H1 (cell line): ENCODE measurements at regions of chr6 and their contacts with region 1.

Region 1: DNA sequence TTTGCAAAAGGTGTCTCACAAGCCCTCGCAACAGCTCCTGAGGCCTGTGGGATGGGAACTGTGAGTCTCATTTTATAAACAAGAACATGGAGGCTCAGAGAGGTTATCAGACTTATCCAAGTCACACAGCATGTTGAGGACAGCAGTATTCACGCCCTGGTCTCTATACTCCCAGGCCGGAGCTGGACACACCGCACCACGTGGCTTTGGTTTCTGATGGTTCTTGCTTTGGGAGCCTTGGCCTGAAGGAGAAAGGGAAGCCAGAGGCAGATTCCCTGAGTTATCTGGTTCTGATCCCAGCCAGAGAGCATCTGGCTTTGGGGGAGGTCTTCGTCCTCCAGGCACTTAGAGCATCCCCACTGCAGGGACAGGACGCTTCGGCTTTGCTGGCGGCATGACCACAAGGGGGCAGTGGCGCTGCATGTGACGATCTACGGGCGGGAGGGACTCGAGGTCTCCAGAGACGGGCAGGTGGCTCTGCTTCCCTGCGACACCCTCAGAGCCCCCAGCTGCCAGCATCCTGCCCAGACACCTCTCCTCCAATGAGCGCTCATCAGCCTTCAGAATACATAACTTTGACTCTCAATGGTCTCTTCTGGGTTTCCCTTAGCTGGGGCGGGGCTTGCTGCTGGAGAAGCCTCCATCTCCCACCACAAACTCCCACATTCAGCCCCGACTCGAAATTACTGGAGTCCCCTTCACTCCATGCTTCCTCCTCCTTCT is 51.4 kb upstream of the SAYSD1 start:
- DNase-seq: peak; percentile 79 to 99
- H3K4me3 ChIP-seq: no peak overlapping the region
- H3K27ac ChIP-seq: no peak overlapping the region
- H3K4me1 ChIP-seq: no peaks in the 10 kb centered on the region
- H3K27me3 ChIP-seq: no peaks in the 10 kb centered on the region
- CTCF ChIP-seq: peak; percentile 98 to 100 (median 98)
- EP300 ChIP-seq: no peak
- POLR2A ChIP-seq: no peak
- RAD21 ChIP-seq: peak; percentile 99 to 100

Region 2: GRCh38 chr6:38933432-38933831 is 232.9 kb before region 1 on chr6:
- CTCF ChIA-PET with region 1: no interaction called
- POLR2A ChIA-PET with region 1: no interaction called
- DNase-seq: no peak
- H3K4me3 ChIP-seq: no peak overlapping the region
- H3K27ac ChIP-seq: no peak overlapping the region
- H3K4me1 ChIP-seq: no peaks in the 10 kb centered on the region
- H3K27me3 ChIP-seq: no peaks in the 10 kb centered on the region
- CTCF ChIP-seq: peak in 1 of 3 experiments; percentile 14; a peak in 1 of 4 replicates
- EP300 ChIP-seq: no peak
- POLR2A ChIP-seq: no peak
- RAD21 ChIP-seq: 0 out of 4 replicates have a peak, but pooled peaks of 1 of the 2 experiments have one; percentile 11

Region 3: GRCh38 chr6:39153766-39154397 is 12.5 kb before region 1 on chr6:
- CTCF ChIA-PET with region 1: interaction called, 33 read pairs
- POLR2A ChIA-PET with region 1: interaction called, 3 read pairs
- DNase-seq: no peak
- H3K4me3 ChIP-seq: no peak overlapping the region
- H3K27ac ChIP-seq: no peak overlapping the region
- H3K4me1 ChIP-seq: no peaks in the 10 kb centered on the region
- H3K27me3 ChIP-seq: no peaks in the 10 kb centered on the region
- CTCF ChIP-seq: no peak
- EP300 ChIP-seq: no peak
- POLR2A ChIP-seq: no peak
- RAD21 ChIP-seq: no peak

Region 4: DNA sequence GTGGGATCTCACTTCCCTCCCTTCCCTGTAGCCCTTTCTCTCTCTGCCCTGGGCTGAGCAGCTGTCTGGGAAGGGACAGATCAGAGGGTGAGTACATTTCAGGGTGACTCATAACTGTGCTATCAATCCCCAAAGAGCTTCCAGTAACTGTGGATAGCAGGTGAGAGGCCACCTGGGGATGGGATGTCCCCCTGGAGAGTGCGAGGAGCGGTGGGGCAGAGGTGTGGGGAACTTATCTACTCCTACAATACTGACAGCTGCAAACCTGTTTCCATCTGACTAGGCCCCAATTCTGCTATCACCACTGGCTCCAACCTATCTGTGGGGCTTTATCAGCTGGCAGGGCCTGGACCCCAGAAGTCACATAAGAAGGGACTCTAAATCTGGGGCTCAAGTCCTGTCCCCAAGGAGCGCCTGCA is 30.3 kb after region 1 on chr6:
- CTCF ChIA-PET with region 1: interaction called, 165 read pairs
- POLR2A ChIA-PET with region 1: interaction called, 3 read pairs
- DNase-seq: no peak
- H3K4me3 ChIP-seq: no peak overlapping the region
- H3K27ac ChIP-seq: no peak overlapping the region
- H3K4me1 ChIP-seq: 0 out of 7 replicates have a peak, but pooled peaks cover 0 to 2% (median 0%) of the 10 kb centered on the region in 4 experiments
- H3K27me3 ChIP-seq: no peaks in the 10 kb centered on the region
- CTCF ChIP-seq: no peak
- EP300 ChIP-seq: no peak
- POLR2A ChIP-seq: no peak
- RAD21 ChIP-seq: no peak

Region 5: DNA sequence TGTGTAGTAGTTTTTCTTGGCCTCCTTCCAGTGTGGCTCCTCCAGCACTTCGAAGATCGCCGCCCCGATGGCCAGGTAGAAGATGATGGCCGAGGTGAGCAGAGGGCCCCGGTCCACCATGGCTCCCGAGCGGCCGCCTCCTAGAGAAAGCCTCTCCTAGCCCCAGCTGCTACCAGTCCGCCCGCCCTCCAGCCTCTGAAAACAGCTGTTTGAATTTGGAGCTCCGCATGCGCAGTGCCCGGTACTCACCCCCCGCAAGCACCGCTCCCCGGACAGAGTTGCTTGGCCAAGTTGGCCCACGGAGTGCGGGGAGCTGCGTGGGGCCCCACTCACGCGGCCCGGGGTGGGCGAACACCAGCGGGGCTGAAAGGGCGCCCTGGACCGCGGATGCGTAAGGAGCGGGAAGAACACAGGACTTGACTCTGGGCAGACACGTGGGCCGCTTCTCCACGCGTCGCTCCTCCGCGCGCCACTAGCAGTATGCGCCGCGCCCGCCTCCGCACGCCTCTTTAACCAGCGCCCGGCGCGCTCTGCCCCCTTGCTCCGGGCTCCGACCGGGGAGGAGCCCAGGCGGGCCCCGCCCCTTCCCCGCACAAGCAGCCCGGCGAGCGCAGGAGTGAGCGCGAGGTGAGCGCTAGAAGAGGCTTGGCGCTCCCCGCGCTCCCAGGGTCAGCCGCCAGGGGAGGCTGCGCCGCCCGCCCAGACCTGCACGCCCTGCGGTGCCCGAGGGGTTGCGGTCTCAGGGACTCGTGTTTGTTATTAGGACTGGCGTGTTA is 62.8 kb after region 1 on chr6 and contains the start of gene KCNK5:
- CTCF ChIA-PET with region 1: interaction called, 16 read pairs
- POLR2A ChIA-PET with region 1: interaction called, 5 read pairs
- DNase-seq: peak; percentile 80 to 93
- H3K4me3 ChIP-seq: peak within 1 kb of the TSS; percentile 63 to 88 (median 76)
- H3K27ac ChIP-seq: peak within 1 kb of the TSS; percentile 68; the same call in 1 of the 2 replicates
- H3K4me1 ChIP-seq: peaks cover 24 to 52% (median 36%) of the 10 kb centered on the region in 4 experiments
- H3K27me3 ChIP-seq: no peaks in the 10 kb centered on the region; a peak in 1 of 7 replicates
- CTCF ChIP-seq: peak; percentile 83 to 91 (median 90)
- EP300 ChIP-seq: no peak
- POLR2A ChIP-seq: peak; percentile 77 to 88
- RAD21 ChIP-seq: peak; percentile 65 to 83
- total RNA-seq, gene KCNK5: 42.2 and 44.3 TPM in 2 replicates

Region 6: GRCh38 chr6:39263303-39264037 is 97.1 kb after region 1 on chr6:
- CTCF ChIA-PET with region 1: interaction called, 13 read pairs
- POLR2A ChIA-PET with region 1: no interaction called
- DNase-seq: peak in 1 of 2 experiments; percentile 25
- H3K4me3 ChIP-seq: peak overlapping the region in 1 of 4 experiments; percentile 43; a peak in 1 of 8 replicates
- H3K27ac ChIP-seq: peak overlapping the region; percentile 47; the same call in 1 of the 2 replicates
- H3K4me1 ChIP-seq: peaks cover 0 to 10% (median 7%) of the 10 kb centered on the region in 4 experiments; a peak in 5 of 7 replicates
- H3K27me3 ChIP-seq: no peaks in the 10 kb centered on the region
- CTCF ChIP-seq: no peak
- EP300 ChIP-seq: no peak
- POLR2A ChIP-seq: no peak
- RAD21 ChIP-seq: 0 out of 4 replicates have a peak, but pooled peaks of 1 of the 2 experiments have one; percentile 2

Region 7: GRCh38 chr6:39302669-39303424 is 136.5 kb after region 1 on chr6:
- CTCF ChIA-PET with region 1: interaction called, 656 read pairs
- POLR2A ChIA-PET with region 1: interaction called, 4 read pairs
- DNase-seq: peak; percentile 73 to 97
- H3K4me3 ChIP-seq: no peak overlapping the region
- H3K27ac ChIP-seq: no peak overlapping the region
- H3K4me1 ChIP-seq: peaks cover 0 to 4% (median under 1%) of the 10 kb centered on the region in 4 experiments; a peak in 2 of 7 replicates
- H3K27me3 ChIP-seq: no peaks in the 10 kb centered on the region; a peak in 1 of 7 replicates
- CTCF ChIP-seq: peak; percentile 95 to 98 (median 97)
- EP300 ChIP-seq: no peak
- POLR2A ChIP-seq: no peak
- RAD21 ChIP-seq: peak; percentile 96 to 98